CD14-positive monocyte (primary cell): ENCODE measurements at regions of chr1 and their contacts with region 1.

Region 1: GRCh38 chr1:172826096-172826743 is 167.3 kb downstream of the FASLG start:
- DNase-seq: peak in 2 of 3 donors; percentile 29 to 34
- H3K4me3 ChIP-seq: peak overlapping the region in 2 of 3 experiments; percentile 23 to 37
- H3K4me3 Mint-ChIP-seq: no peak overlapping the region
- H3K27ac ChIP-seq: peak overlapping the region in 1 of 2 donors; percentile 16
- H3K27ac Mint-ChIP-seq: no peak overlapping the region
- H3K4me1 ChIP-seq: peaks cover 9 to 20% of the 10 kb centered on the region in 2 donors
- H3K4me1 Mint-ChIP-seq: peaks cover 12% of the 10 kb centered on the region
- H3K27me3 ChIP-seq: no peaks in the 10 kb centered on the region
- H3K27me3 Mint-ChIP-seq: no peaks in the 10 kb centered on the region
- CTCF ChIP-seq: peak; percentile 77

Region 2: DNA sequence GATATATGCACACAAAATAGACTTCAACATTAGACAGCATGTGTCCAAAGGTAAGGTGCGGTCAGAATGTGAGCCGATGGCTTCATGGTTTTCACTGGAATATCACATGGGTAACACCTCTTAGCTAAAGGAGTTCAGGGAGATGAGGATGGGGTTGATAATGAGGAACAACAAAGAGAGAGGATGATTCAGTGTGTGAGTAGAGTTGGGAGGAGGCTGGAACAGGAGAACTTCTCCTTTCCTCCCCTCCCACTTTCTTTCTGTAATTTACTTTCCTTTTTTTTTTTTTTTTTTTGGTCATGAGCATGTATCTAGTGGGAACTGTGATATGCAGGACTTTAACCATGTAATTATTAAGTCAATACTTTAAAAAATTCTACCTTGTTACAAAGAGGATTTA is 68.0 kb before region 1 on chr1:
- intact Hi-C with region 1: loop called in 1 of 2 experiments (anchors 10 kb)
- DNase-seq: peak; percentile 45 to 64 (median 58)
- H3K4me3 ChIP-seq: no peak overlapping the region
- H3K4me3 Mint-ChIP-seq: no peak overlapping the region
- H3K27ac ChIP-seq: no peak overlapping the region
- H3K27ac Mint-ChIP-seq: peak overlapping the region in 4 of 7 donors; percentile 31 to 61 (median 40)
- H3K4me1 ChIP-seq: peaks cover 6 to 32% of the 10 kb centered on the region in 2 donors
- H3K4me1 Mint-ChIP-seq: peaks cover 26% of the 10 kb centered on the region
- H3K27me3 ChIP-seq: no peaks in the 10 kb centered on the region
- H3K27me3 Mint-ChIP-seq: peaks cover 0 to 9% (median 3%) of the 10 kb centered on the region in 3 donors
- CTCF ChIP-seq: no peak

Region 3: GRCh38 chr1:172795741-172796140 is 30.5 kb before region 1 on chr1:
- intact Hi-C with region 1: no loop called
- DNase-seq: no peak
- H3K4me3 ChIP-seq: no peak overlapping the region
- H3K4me3 Mint-ChIP-seq: no peak overlapping the region
- H3K27ac ChIP-seq: no peak overlapping the region
- H3K27ac Mint-ChIP-seq: no peak overlapping the region
- H3K4me1 ChIP-seq: no peaks in the 10 kb centered on the region
- H3K4me1 Mint-ChIP-seq: no peaks in the 10 kb centered on the region
- H3K27me3 ChIP-seq: no peaks in the 10 kb centered on the region
- H3K27me3 Mint-ChIP-seq: peaks cover 0 to 3% (median 0%) of the 10 kb centered on the region in 3 donors
- CTCF ChIP-seq: no peak

Region 4: DNA sequence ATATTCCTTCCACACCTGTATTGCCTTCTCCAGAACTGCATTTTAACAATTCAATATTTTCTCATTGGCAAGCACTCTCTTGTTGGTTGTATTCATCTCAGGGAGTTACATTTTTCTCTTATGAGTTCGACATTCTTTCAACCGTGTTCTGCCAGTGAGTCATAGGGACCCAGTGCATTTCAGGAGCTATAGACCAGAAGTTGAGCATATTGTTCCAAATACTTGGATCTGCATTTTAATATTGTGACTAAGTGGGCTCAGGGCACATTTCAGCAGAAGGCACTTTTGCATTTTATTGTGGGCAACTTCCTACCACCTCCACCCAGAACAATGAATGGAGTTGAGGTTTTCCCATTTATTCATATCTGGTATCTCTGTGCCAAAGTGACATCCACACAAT is 91.8 kb after region 1 on chr1:
- intact Hi-C with region 1: loop called in 1 of 2 experiments (anchors 10 kb)
- DNase-seq: no peak
- H3K4me3 ChIP-seq: no peak overlapping the region
- H3K4me3 Mint-ChIP-seq: no peak overlapping the region
- H3K27ac ChIP-seq: no peak overlapping the region
- H3K27ac Mint-ChIP-seq: no peak overlapping the region
- H3K4me1 ChIP-seq: peaks cover 0 to 7% of the 10 kb centered on the region in 2 donors
- H3K4me1 Mint-ChIP-seq: peaks cover 3% of the 10 kb centered on the region
- H3K27me3 ChIP-seq: no peaks in the 10 kb centered on the region
- H3K27me3 Mint-ChIP-seq: peaks cover 0 to 1% (median 0%) of the 10 kb centered on the region in 3 donors
- CTCF ChIP-seq: no peak

Region 5: GRCh38 chr1:172948457-172948856 is 122.2 kb after region 1 on chr1:
- intact Hi-C with region 1: loop called in 1 of 2 experiments (anchors 10 kb)
- DNase-seq: peak in 1 of 3 donors; percentile 46
- H3K4me3 ChIP-seq: no peak overlapping the region
- H3K4me3 Mint-ChIP-seq: no peak overlapping the region
- H3K27ac ChIP-seq: no peak overlapping the region
- H3K27ac Mint-ChIP-seq: no peak overlapping the region
- H3K4me1 ChIP-seq: no peaks in the 10 kb centered on the region
- H3K4me1 Mint-ChIP-seq: peaks cover 4% of the 10 kb centered on the region
- H3K27me3 ChIP-seq: no peaks in the 10 kb centered on the region
- H3K27me3 Mint-ChIP-seq: peaks cover 0 to 2% (median 0%) of the 10 kb centered on the region in 3 donors
- CTCF ChIP-seq: no peak

Region 6: DNA sequence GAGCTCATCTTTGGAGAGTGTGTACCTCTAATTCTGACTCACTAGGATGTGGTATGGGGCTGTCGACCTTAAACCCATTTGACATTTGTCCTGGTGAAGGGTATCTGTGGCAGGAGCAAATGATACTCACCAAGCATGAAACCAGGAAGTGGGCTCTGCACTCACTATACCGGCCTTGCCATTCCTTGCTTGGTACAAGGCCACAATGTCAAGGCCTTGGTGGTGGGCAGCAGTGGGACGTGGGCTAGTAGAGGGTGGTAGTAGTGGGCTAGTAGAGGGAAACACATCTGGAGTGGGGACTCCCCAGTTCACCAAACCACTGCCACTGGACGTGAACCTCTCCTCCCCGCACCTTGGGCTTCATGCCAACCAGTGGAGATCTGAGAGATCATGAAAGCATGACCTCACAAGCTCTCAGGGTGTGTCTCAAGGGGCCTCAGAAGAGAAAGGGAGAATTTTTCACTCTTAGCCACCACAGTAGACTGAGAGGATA is 369.4 kb after region 1 on chr1:
- intact Hi-C with region 1: loop called in 1 of 2 experiments (anchors 5 kb)
- DNase-seq: no peak
- H3K4me3 ChIP-seq: no peak overlapping the region
- H3K4me3 Mint-ChIP-seq: no peak overlapping the region
- H3K27ac ChIP-seq: peak overlapping the region in 1 of 2 donors; percentile 1
- H3K27ac Mint-ChIP-seq: peak overlapping the region in 1 of 7 donors; percentile 63
- H3K4me1 ChIP-seq: peaks cover 11 to 16% of the 10 kb centered on the region in 2 donors
- H3K4me1 Mint-ChIP-seq: peaks cover 21% of the 10 kb centered on the region
- H3K27me3 ChIP-seq: no peaks in the 10 kb centered on the region
- H3K27me3 Mint-ChIP-seq: peaks cover 0 to 2% (median 0%) of the 10 kb centered on the region in 3 donors
- CTCF ChIP-seq: no peak

Region 7: DNA sequence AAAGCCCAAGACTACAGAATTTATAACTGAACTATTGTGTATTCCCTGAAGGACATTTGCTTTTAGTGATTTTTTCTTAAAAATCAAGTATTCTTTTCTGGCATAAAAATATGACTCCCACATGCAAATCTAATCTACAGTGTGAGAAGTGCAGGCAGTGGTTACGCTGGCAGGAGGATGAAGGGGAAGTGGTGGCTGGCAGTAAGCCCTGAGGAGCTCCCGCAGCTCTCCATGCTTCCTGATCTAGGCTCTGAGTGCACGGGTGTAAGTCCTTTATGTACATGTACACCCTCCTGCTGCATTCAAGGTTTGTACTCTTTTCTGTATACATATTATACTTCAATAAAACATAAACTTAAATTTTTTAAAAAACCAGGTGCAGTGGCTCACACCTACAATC is 583.4 kb after region 1 on chr1:
- intact Hi-C with region 1: loop called in 1 of 2 experiments (anchors 10 kb)
- DNase-seq: peak; percentile 71 to 83 (median 76)
- H3K4me3 ChIP-seq: no peak overlapping the region
- H3K4me3 Mint-ChIP-seq: no peak overlapping the region
- H3K27ac ChIP-seq: peak overlapping the region in 1 of 2 donors; percentile 53
- H3K27ac Mint-ChIP-seq: peak overlapping the region in 6 of 7 donors; percentile 63 to 85 (median 72)
- H3K4me1 ChIP-seq: peaks cover 64 to 72% of the 10 kb centered on the region in 2 donors
- H3K4me1 Mint-ChIP-seq: peaks cover 73% of the 10 kb centered on the region
- H3K27me3 ChIP-seq: no peaks in the 10 kb centered on the region
- H3K27me3 Mint-ChIP-seq: peaks cover 0 to 2% (median 0%) of the 10 kb centered on the region in 3 donors
- CTCF ChIP-seq: no peak